Calu3 (cell line): ENCODE measurements at regions of chr18 and their contacts with region 1.

Region 1: GRCh38 chr18:22391407-22392345 is 26.0 kb downstream of the CTAGE1 start:
- DNase-seq: peak; percentile 77
- H3K4me3 Mint-ChIP-seq: no peak overlapping the region
- H3K27ac Mint-ChIP-seq: peak overlapping the region; percentile 50
- H3K4me1 Mint-ChIP-seq: peaks cover 39% of the 10 kb centered on the region
- H3K27me3 Mint-ChIP-seq: no peaks in the 10 kb centered on the region
- CTCF ChIP-seq: no peak

Region 2: DNA sequence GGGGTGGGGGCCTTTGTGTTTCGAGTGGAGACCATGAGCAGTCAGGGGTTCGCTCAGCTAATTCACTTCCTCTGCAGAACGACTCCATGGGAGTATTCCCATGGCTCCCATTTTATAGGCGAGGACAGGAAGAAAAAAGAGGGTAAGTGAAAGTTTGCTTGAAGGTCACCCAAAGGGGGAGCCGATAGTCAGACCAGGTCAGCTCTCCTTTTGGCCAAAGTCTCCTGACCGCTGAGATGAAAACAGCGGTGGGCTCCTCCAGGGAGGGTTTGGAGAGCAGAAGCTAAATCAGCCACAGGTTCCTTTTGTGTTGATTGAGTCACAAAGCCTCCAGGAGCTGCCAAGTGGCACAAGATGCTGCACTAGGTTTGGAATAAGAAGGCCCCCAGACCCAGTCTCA is 60.1 kb after region 1 on chr18:
- CTCF ChIA-PET with region 1: no interaction called
- intact Hi-C with region 1: loop called (anchors 10 kb)
- DNase-seq: no peak
- H3K4me3 Mint-ChIP-seq: peak overlapping the region; percentile 12
- H3K27ac Mint-ChIP-seq: peak overlapping the region; percentile 62
- H3K4me1 Mint-ChIP-seq: peaks cover 18% of the 10 kb centered on the region
- H3K27me3 Mint-ChIP-seq: no peaks in the 10 kb centered on the region
- CTCF ChIP-seq: no peak